Kidney (tissue), 22 donors: ENCODE measurements at regions of chr3 and their contacts with region 1.

Region 1: GRCh38 chr3:196969660-196970546 is 1.3 kb upstream of the PIGZ start:
- DNase-seq: peak; percentile 59 to 82 (median 73)
- H3K4me3 ChIP-seq: peak overlapping the region in 1 of 3 donors; percentile 48
- H3K27ac ChIP-seq: no peak overlapping the region
- H3K4me1 ChIP-seq: peaks cover 0 to 6% (median 0%) of the 10 kb centered on the region in 3 donors
- H3K27me3 ChIP-seq: peaks cover 28% of the 10 kb centered on the region
- CTCF ChIP-seq: peak; percentile 88

Region 2: DNA sequence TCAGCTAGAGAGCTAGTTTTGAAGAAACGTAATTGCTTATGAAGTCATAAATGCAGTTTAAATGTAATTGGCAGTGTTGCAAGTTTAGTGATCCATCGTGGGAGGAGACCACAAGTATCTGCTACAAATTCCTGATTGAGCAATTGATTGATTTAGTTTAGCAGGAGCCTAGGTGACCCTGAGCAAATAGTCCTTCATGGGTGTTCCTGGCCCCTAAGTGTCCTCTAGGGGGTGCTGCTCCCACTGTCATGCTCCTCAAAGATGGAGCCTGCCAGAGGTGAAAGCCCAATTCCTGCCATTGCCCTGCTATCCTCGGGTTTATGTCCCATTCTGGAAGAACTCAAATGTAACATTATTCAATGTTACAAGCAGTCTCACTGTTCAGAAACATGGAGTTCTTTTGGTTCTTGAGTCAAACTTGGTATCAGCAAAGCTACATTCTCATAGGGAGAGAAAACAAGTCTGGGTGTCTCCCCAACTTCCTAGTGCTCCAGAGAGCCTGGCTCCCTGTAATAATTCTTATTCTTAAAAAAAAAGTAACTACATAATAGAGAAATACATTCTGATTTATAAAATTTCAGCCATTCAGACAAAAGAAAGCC is 132.0 kb before region 1 on chr3:
- intact Hi-C with region 1: loop called (anchors 10 kb)
- DNase-seq: peak in 3 of 5 donors; percentile 11 to 45 (median 15)
- H3K4me3 ChIP-seq: no peak overlapping the region
- H3K27ac ChIP-seq: no peak overlapping the region
- H3K4me1 ChIP-seq: peaks cover 0 to 3% (median 0%) of the 10 kb centered on the region in 3 donors
- H3K27me3 ChIP-seq: no peaks in the 10 kb centered on the region
- CTCF ChIP-seq: peak; percentile 50